PC-3 (cell line): ENCODE measurements at regions of chr1 and their contacts with region 1.

Region 1: DNA sequence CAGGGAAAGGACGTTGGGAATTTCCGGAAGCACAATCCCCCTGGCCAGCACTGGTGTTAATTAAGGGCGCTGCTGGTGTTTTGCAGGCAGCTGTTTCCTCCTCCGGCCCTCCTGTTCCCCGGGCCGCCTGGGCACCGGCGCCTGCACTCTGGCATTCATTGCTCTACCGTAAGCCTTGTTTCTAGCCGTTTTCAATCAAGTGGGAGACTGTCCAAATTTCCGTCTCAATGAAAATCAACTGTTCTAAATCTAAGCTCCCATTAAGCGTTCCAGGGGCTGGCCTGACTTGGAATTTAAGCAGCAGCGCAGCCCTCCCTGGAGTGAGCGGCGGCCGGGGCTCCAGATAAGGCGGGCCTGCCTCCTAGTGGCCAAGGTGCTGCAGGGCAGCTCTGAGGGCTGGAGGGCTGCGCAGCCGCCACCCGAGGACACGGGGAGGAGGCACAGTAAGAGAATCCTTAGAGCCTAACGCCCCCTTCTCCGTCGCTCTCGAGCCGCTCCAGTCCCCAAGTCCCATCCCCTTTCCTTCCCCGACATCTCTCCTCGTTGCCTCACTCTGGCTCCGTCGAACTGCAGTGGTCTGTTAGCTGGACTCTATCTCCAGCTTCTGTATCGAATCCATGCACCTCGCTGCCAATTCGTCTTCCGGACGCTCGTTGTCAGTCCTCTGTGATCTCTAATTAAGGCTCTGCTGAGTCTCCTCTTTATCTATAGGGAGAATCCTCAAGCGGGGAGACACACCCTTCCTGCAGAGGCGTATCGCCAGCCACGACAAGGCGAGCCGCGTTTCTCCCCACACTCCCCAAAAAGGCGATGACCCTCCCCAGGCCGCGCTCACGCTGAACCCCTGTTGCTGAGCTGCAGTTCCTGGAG is 57.8 kb upstream of the LRRC8D start:
- DNase-seq: peak; percentile 89
- ATAC-seq: peak; percentile 98
- H3K4me3 ChIP-seq: peak overlapping the region; percentile 67
- H3K27ac ChIP-seq: no peak overlapping the region
- H3K4me1 ChIP-seq: peaks cover 10% of the 10 kb centered on the region; the same call in 1 of the 2 replicates
- H3K27me3 ChIP-seq: no peaks in the 10 kb centered on the region
- CTCF ChIP-seq: peak; percentile 98

Region 2: GRCh38 chr1:89483010-89483756 is 279.8 kb before region 1 on chr1:
- CTCF ChIA-PET with region 1: interaction called, 4 read pairs
- POLR2A ChIA-PET with region 1: no interaction called
- intact Hi-C with region 1: loop called (anchors 1 kb)
- DNase-seq: peak; percentile 86
- ATAC-seq: peak; percentile 96
- H3K4me3 ChIP-seq: no peak overlapping the region
- H3K27ac ChIP-seq: no peak overlapping the region
- H3K4me1 ChIP-seq: no peaks in the 10 kb centered on the region
- H3K27me3 ChIP-seq: no peaks in the 10 kb centered on the region
- CTCF ChIP-seq: peak; percentile 89

Region 3: DNA sequence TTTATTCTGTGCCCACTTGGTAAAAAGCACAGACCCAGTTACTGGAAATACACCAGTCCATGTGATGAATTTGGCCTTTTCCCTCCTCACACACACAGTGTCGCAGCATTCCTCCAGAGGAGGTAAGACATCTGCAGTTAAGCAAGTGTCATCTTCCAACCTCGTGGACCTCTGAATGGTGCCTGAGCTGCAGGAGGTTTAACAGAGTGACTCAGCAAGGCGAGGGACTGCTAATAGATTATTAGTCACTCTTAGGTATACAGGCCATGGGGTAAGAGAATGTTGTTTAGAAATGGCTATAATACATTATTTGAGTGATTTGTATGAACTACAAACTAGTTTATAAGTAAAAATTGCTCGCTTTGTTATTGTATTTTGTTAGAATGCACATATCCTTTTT is 247.0 kb before region 1 on chr1:
- CTCF ChIA-PET with region 1: no interaction called
- POLR2A ChIA-PET with region 1: no interaction called
- intact Hi-C with region 1: loop called (anchors 2 kb)
- DNase-seq: peak; percentile 92
- ATAC-seq: peak; percentile 99
- H3K4me3 ChIP-seq: no peak overlapping the region
- H3K27ac ChIP-seq: peak overlapping the region; percentile 63
- H3K4me1 ChIP-seq: peaks cover 20% of the 10 kb centered on the region
- H3K27me3 ChIP-seq: no peaks in the 10 kb centered on the region
- CTCF ChIP-seq: no peak

Region 4: DNA sequence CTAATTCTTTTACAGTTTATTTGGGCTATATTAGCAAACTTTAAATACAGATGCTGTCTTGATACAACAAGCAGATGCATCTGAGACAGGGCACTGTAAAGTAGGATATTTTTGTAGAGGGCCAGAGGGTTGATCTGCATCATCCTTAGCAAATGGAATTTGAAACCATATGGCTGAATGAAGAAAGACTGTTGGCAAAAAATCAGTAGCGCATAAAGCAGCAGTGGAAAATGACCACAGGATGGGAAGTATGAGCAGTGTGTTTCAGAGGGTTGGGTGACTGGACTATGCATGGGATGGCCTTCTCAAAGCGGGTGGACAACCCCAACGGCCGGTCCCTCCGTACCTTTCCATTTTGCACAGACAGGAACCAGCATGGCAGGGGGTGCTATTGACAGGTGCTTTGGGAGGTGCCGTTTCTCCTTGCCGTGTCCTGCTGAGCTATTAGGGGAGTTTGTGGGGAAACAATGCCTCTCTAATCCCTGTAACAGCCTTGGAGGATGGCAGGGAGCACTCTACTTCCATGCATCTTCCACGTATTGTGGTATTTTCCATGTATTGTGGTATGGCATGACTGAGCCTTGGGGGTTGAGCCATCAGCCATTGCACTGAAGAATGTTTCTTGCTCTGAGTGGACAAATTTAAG is 232.4 kb before region 1 on chr1:
- CTCF ChIA-PET with region 1: no interaction called
- POLR2A ChIA-PET with region 1: no interaction called
- intact Hi-C with region 1: no loop called
- DNase-seq: no peak
- ATAC-seq: no peak
- H3K4me3 ChIP-seq: no peak overlapping the region
- H3K27ac ChIP-seq: no peak overlapping the region
- H3K4me1 ChIP-seq: peaks cover 13% of the 10 kb centered on the region
- H3K27me3 ChIP-seq: no peaks in the 10 kb centered on the region
- CTCF ChIP-seq: no peak

Region 5: DNA sequence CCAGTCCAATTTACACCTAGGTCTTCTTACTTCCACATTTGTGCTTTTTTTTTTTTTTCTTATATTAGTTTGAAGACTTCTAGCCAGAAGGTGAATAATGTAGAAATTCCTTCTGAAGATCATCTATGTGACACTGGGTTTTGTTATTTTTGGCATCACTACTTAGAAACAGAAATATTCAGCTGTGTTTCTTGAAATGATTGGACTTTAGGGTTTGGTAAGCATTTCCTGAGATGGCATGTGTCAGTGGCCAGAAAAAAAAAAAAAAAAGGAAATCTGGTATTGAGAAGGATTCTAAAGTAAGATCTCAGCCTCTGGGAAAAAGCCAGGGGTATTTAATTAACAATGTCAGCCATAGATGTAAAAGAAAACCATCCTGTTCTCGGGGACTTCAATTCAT is 173.5 kb before region 1 on chr1:
- CTCF ChIA-PET with region 1: no interaction called
- POLR2A ChIA-PET with region 1: no interaction called
- intact Hi-C with region 1: no loop called
- DNase-seq: no peak
- ATAC-seq: no peak
- H3K4me3 ChIP-seq: no peak overlapping the region
- H3K27ac ChIP-seq: no peak overlapping the region
- H3K4me1 ChIP-seq: peaks cover 22% of the 10 kb centered on the region
- H3K27me3 ChIP-seq: no peaks in the 10 kb centered on the region
- CTCF ChIP-seq: no peak

Region 6: DNA sequence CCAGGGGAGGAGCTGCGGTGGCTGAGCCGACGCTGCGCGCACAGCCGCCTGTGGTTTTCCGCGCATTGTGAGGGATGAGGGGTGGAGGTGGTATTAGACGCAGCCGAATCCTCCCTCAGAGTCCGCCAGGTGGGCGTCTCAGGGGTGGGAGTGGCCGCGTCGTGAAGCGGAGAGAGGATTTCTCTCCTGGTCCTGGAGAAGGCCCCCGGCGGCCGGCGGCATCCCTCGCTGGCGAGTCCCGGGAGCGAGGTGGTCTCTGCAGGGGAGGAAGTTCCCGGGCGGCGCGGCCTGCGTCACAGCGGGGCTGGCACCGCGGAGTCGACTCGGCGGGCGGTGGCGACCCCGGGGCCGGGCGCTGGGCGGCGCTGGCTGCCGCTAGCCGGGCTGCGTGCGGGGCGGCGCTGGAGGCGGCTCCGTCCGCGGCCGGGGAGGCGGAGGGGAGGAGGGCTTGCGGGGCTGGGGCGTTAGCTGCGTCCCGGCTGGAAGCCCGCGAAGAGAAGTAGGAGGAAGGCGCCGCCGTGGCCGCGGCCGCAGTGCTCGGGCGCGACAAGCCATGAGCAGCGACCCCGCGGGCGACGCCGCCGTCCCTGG is 130.3 kb before region 1 on chr1 and contains the start of gene LRRC8C:
- CTCF ChIA-PET with region 1: interaction called, 12 read pairs
- POLR2A ChIA-PET with region 1: interaction called, 4 read pairs
- intact Hi-C with region 1: loop called (anchors 1 kb)
- DNase-seq: peak; percentile 74
- ATAC-seq: peak; percentile 68
- H3K4me3 ChIP-seq: peak within 1 kb of the TSS; percentile 77
- H3K27ac ChIP-seq: no peak within 1 kb of the TSS
- H3K4me1 ChIP-seq: peaks cover 32% of the 10 kb centered on the region
- H3K27me3 ChIP-seq: no peaks in the 10 kb centered on the region
- CTCF ChIP-seq: no peak; the same call in 1 of the 2 replicates
- total RNA-seq, gene LRRC8C: 3.4 and 4.3 TPM in 2 replicates

Region 7: DNA sequence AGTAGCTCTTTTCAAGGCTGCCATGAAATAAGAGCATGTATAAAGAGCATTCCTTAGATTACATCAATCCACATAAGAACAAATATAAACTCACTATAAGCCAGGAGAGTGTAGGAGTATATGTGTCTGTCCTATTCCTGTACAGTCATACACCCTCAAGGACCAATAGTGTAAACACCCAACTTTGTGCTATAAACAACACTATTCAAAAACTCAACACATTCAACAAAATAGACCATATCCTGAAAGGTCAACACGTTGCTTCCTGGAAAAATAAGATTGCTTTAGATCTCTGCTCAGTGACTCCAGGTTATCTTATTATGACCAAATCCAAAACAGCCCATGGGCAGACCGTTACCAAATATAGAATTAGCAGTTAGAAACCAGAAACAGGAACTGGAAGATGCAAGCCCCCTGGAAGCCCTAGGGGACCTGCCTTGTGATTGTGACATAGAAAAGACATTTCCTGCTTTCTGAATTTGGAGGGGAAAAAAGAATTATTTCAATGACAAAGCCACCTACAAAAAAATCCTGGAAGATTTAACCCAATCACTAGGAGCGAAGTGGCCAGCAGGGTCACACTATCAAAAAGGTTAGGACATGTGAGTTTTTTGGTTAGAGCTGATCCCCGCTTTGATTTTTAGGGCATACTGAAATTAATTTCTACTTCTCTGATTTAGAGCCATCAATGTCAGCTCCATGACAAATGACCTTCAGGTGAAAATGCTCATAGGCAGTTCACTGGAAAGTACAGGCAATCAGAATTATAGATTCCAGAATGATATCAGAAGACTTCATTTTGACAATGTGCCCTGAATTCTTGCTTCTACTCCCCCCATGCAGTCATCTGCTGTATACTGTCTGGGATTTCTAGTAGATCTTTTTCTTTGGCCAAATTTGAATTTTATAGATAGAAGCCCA is 70.2 kb before region 1 on chr1:
- CTCF ChIA-PET with region 1: no interaction called
- POLR2A ChIA-PET with region 1: no interaction called
- intact Hi-C with region 1: loop called (anchors 10 kb)
- DNase-seq: peak; percentile 40
- ATAC-seq: peak; percentile 81
- H3K4me3 ChIP-seq: no peak overlapping the region
- H3K27ac ChIP-seq: no peak overlapping the region
- H3K4me1 ChIP-seq: peaks cover 13% of the 10 kb centered on the region; the same call in 1 of the 2 replicates
- H3K27me3 ChIP-seq: no peaks in the 10 kb centered on the region
- CTCF ChIP-seq: no peak

Region 8: DNA sequence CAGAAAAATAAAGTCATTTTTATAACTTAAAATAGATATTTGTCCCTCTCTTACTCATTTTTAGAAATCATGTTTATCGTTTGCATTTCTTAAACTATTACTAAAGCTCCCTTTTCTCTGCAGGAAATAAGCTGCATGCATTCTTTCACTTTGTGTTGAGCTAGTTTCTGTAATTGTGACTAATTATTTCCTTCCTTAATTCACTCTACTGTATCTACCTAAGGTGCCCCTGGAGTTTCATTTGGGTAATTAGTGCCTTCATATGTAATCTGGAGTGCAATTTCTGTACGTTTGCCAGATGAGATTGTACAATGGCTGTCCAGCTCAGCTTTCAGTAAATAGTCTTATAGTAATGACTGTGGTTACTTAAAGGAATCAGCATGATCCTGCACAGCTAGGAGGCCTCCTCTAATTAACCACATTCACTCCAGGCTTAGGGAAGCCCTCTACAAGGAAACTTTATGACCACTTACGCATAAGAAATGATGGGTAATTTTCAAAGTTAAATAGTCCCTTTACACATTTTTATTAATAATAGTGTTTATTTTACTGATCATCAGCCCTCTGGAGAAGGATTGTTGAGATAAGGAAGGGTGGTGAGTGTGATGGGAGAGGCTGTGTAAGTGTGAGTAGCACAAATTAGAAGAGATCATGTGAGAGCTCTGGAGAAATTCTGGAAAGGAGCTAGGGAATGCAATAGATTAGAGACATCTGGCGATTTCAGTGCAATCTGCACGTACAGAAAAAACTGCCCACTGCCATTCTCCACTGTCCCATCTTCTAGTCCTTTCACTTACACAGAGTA is 43.3 kb before region 1 on chr1:
- CTCF ChIA-PET with region 1: interaction called, 5 read pairs
- POLR2A ChIA-PET with region 1: no interaction called
- intact Hi-C with region 1: loop called (anchors 5 kb)
- DNase-seq: no peak
- ATAC-seq: peak; percentile 63
- H3K4me3 ChIP-seq: peak overlapping the region; percentile 29; the same call in 1 of the 2 replicates
- H3K27ac ChIP-seq: peak overlapping the region; percentile 59
- H3K4me1 ChIP-seq: peaks cover 40% of the 10 kb centered on the region
- H3K27me3 ChIP-seq: no peaks in the 10 kb centered on the region
- CTCF ChIP-seq: no peak

Region 9: DNA sequence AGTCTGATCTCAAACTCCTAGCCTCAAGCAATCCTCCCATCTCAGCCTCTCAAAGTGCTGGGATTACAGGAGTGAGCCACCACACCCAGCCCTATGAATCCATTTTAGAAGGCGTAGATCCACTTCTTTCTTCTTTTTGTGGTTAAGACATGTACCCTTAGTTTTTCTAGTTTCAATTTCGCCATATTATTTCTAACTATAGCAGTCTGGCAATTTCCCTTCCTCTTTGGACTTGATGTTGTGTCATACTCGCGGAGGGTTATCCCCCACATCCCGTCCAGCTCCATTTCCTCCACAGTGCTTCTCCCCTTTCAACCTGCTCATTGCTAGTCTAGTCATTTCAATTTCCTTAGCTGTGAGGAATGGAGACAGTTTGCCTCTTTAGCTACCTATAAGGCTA is 52.6 kb after region 1 on chr1:
- CTCF ChIA-PET with region 1: no interaction called
- POLR2A ChIA-PET with region 1: no interaction called
- intact Hi-C with region 1: no loop called
- DNase-seq: no peak
- ATAC-seq: no peak
- H3K4me3 ChIP-seq: no peak overlapping the region
- H3K27ac ChIP-seq: no peak overlapping the region
- H3K4me1 ChIP-seq: peaks cover 7% of the 10 kb centered on the region; the same call in 1 of the 2 replicates
- H3K27me3 ChIP-seq: no peaks in the 10 kb centered on the region
- CTCF ChIP-seq: no peak

Region 10: DNA sequence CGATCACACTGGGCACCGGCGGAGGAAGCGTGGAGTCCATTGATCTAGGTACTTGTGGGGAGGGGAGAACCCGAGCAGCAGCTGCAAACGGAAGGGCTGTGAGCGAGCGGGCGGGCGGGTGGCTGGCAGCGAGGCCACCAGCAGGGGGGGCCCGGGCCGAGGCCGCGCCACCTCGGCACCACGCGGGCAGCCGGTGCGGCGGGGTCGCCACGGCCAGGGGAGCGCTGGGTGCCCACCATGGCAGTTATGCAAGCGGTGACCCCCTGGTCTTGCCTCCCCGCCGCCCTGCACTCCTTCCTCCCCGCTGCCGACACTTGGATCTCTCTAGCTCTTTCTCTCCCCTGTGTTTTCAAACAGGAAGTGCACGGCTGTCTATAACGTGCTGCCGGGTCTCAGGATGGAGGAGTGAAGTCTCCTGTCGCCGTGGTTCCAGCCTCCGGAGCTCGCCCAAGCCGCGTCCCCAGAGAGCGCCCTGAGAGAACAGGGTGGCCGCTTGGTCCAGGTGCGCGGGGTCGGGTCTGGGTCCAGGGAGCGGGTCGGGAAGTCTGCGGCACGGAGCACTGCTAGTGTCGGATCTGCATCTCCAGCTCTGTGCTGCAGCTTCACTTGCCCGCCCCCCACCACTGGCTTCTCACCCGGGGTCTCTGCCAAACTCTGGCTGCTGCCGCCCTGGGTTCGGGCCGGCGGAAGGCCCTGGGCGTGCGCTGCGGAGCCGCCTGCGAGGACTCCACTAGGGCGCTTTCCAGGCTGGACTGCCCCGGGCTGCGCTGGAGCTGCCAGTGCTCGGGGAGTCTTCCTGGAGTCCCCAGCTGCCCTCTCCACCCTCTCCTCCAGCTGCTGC is 80.5 kb after region 1 on chr1:
- CTCF ChIA-PET with region 1: no interaction called
- POLR2A ChIA-PET with region 1: no interaction called
- intact Hi-C with region 1: no loop called
- DNase-seq: peak; percentile 67
- ATAC-seq: peak; percentile 91
- H3K4me3 ChIP-seq: peak overlapping the region; percentile 90
- H3K27ac ChIP-seq: peak overlapping the region; percentile 58
- H3K4me1 ChIP-seq: peaks cover 16% of the 10 kb centered on the region
- H3K27me3 ChIP-seq: no peaks in the 10 kb centered on the region
- CTCF ChIP-seq: peak; percentile 69